ENCODE measurements at regions of chr4 and their contacts with region 1.

Region 1: GRCh38 chr4:1726146-1726934 is 5.0 kb downstream of the TACC3 start:
- DNase-seq: peak; percentile 79 to 99
- H3K4me3 ChIP-seq: no peak overlapping the region
- H3K27ac ChIP-seq: no peak overlapping the region
- H3K4me1 ChIP-seq: peaks cover 0 to 12% (median 5%) of the 10 kb centered on the region in 4 experiments; a peak in 6 of 7 replicates
- H3K27me3 ChIP-seq: no peaks in the 10 kb centered on the region
- CTCF ChIP-seq: peak in 2 of 3 experiments; percentile 82 to 98; a peak in 3 of 4 replicates
- EP300 ChIP-seq: no peak
- POLR2A ChIP-seq: no peak
- RAD21 ChIP-seq: peak; percentile 56 to 65

Region 2: DNA sequence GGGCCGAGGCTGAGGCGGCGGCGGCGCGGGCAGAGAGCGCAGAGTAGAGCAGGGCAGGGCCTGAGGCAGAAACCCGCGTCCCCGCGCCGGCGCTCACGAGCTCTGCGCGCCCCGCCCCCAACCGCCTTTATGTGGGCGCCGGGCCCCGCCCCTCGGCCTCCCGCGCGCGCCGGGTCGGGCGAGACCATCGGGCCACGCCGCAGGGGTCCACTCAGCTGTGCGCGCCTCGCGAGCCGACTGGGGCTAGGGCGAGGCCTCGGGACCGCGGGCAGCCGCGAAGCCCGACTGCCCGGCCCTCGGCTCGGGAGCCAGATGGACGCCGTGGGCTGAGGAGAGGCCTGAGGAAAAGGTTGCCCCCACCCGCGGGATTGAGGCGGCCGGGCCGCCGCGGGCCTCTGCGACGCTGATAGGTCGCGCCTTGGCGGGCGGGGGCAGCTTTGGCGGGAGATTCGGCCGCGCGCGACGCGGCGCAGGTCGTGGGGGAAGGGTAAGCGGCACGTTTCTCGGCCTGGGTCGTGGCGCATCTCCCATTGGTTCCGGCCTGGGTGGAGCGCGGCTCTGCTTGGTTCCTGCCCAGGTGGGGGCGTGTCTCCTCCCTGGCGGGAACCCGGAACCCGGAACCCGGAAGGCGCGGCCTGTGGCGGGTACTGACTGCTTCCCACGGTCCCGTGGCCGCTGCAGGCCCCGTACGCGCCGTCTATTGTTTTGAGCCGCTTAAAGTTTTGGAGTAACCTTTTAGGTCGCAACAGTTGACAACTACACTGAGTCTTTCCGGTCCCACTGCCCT is 13.9 kb before region 1 on chr4 and contains the start of gene SLBP:
- CTCF ChIA-PET with region 1: interaction called, 326 read pairs
- POLR2A ChIA-PET with region 1: interaction called, 100 read pairs
- DNase-seq: peak; percentile 64 to 95
- H3K4me3 ChIP-seq: peak within 1 kb of the TSS; percentile 52 to 89 (median 86)
- H3K27ac ChIP-seq: peak within 1 kb of the TSS; percentile 95; the same call in 1 of the 2 replicates
- H3K4me1 ChIP-seq: peaks cover 0 to 12% (median 3%) of the 10 kb centered on the region in 4 experiments; a peak in 4 of 7 replicates
- H3K27me3 ChIP-seq: no peaks in the 10 kb centered on the region
- CTCF ChIP-seq: no peak
- EP300 ChIP-seq: peak in 1 of 2 experiments; percentile 17; a peak in 1 of 3 replicates
- POLR2A ChIP-seq: peak in 1 of 2 experiments; percentile 82; a peak in 2 of 3 replicates
- RAD21 ChIP-seq: no peak
- total RNA-seq, gene SLBP: 45.1 and 49.0 TPM in 2 replicates

Region 3: DNA sequence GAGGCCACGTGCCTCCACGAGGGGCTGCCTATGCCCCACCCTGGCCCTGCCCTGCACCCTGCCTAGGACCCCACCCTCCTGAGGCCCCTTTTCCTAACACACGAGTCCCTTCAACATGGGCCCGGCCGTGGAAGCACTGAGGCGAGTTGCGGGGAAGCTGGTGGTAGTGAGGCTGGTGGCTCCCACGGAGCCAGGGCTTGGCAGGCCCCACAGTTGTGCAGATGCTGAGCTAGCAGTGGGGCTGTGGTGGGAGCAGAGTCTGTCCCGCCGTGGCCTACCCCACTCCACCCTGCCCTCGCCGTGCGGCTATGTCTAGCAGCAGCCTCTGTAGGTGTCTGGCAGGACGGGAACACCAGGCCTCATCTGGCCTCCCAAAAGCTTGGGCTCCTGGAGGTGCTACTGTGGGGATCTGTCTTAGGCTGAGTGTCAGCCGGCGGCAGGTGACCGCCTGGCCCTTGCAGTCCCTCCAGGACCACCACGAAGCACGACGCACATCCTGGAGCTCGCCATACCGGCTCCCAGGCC is 13.7 kb after region 1 on chr4:
- CTCF ChIA-PET with region 1: interaction called, 32 read pairs
- POLR2A ChIA-PET with region 1: interaction called, 21 read pairs
- DNase-seq: no peak
- H3K4me3 ChIP-seq: no peak overlapping the region
- H3K27ac ChIP-seq: no peak overlapping the region
- H3K4me1 ChIP-seq: no peaks in the 10 kb centered on the region
- H3K27me3 ChIP-seq: no peaks in the 10 kb centered on the region
- CTCF ChIP-seq: no peak
- EP300 ChIP-seq: no peak
- POLR2A ChIP-seq: no peak
- RAD21 ChIP-seq: no peak

Region 4: DNA sequence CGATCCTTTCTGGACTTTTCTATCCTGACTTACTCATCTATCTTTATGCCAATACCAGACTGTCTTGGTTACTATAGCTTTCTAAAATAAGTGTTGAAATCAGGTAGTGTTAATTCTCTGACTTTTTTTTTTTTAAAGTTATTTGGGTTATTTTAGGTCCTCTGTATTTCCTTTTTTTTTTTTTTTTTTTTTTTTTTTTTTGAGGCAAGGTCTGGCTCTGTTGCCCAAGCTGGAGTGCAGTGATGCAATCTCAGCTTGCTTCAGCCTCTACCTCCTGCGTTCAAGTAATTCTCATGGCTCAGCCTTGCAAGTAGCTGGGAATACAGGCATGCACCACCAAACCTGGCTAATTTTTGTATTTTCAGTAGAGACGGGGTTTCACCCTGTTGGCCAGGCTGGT is 285.2 kb after region 1 on chr4:
- CTCF ChIA-PET with region 1: no interaction called
- POLR2A ChIA-PET with region 1: no interaction called
- DNase-seq: no peak
- H3K4me3 ChIP-seq: no peak overlapping the region
- H3K27ac ChIP-seq: no peak overlapping the region
- H3K4me1 ChIP-seq: peaks cover 0 to 3% (median 0%) of the 10 kb centered on the region in 4 experiments; a peak in 2 of 7 replicates
- H3K27me3 ChIP-seq: peaks cover 0 to 3% (median 0%) of the 10 kb centered on the region in 4 experiments; a peak in 1 of 7 replicates
- CTCF ChIP-seq: no peak
- EP300 ChIP-seq: no peak
- POLR2A ChIP-seq: no peak
- RAD21 ChIP-seq: no peak

Measured in H1 (cell line).